ENCODE measurements at regions of chr11 and their contacts with region 1.

Region 1: GRCh38 chr11:797296-798092 is 587 bp downstream of the SLC25A22 start:
- DNase-seq: peak; percentile 70
- H3K4me3 Mint-ChIP-seq: peak overlapping the region; percentile 90
- H3K27ac Mint-ChIP-seq: peak overlapping the region; percentile 66
- H3K4me1 Mint-ChIP-seq: peaks cover 7% of the 10 kb centered on the region
- H3K27me3 Mint-ChIP-seq: no peaks in the 10 kb centered on the region

Region 2: GRCh38 chr11:747158-748006 is 50.1 kb before region 1 on chr11 and contains the start of gene TALDO1:
- intact Hi-C with region 1: loop called (anchors 2 kb)
- DNase-seq: peak; percentile 84
- H3K4me3 Mint-ChIP-seq: peak within 1 kb of the TSS; percentile 85
- H3K27ac Mint-ChIP-seq: peak within 1 kb of the TSS; percentile 77
- H3K4me1 Mint-ChIP-seq: peaks cover 18% of the 10 kb centered on the region
- H3K27me3 Mint-ChIP-seq: no peaks in the 10 kb centered on the region
- total RNA-seq, gene TALDO1: 270 and 275 TPM in 2 replicates

Region 3: GRCh38 chr11:777288-778255 is 19.9 kb before region 1 on chr11 and contains the start of gene GATD1:
- intact Hi-C with region 1: loop called (anchors 1 kb)
- DNase-seq: peak; percentile 93
- H3K4me3 Mint-ChIP-seq: peak within 1 kb of the TSS; percentile 88
- H3K27ac Mint-ChIP-seq: peak within 1 kb of the TSS; percentile 81
- H3K4me1 Mint-ChIP-seq: peaks cover 19% of the 10 kb centered on the region
- H3K27me3 Mint-ChIP-seq: no peaks in the 10 kb centered on the region
- total RNA-seq, gene GATD1: 68.0 and 75.2 TPM in 2 replicates

Region 4: GRCh38 chr11:809287-810039 is 12.0 kb after region 1 on chr11 and contains the start of gene RPLP2:
- intact Hi-C with region 1: loop called (anchors 1 kb)
- DNase-seq: peak; percentile 95
- H3K4me3 Mint-ChIP-seq: peak within 1 kb of the TSS; percentile 90
- H3K27ac Mint-ChIP-seq: peak within 1 kb of the TSS; percentile 94
- H3K4me1 Mint-ChIP-seq: peaks cover 15% of the 10 kb centered on the region
- H3K27me3 Mint-ChIP-seq: no peaks in the 10 kb centered on the region
- total RNA-seq, gene RPLP2: 2,210 and 2,217 TPM in 2 replicates